Motor neuron (in vitro differentiated cells): ENCODE measurements at regions of chr2 and their contacts with region 1.

Region 1: GRCh38 chr2:186256540-186256939 is 229.5 kb upstream of the ZC3H15 start:
- ATAC-seq: peak in 4 of 8 experiments; percentile 43 to 80 (median 72)
- H3K4me3 ChIP-seq: no peak overlapping the region
- H3K27ac ChIP-seq: no peak overlapping the region
- H3K4me1 ChIP-seq: no peaks in the 10 kb centered on the region

Region 2: DNA sequence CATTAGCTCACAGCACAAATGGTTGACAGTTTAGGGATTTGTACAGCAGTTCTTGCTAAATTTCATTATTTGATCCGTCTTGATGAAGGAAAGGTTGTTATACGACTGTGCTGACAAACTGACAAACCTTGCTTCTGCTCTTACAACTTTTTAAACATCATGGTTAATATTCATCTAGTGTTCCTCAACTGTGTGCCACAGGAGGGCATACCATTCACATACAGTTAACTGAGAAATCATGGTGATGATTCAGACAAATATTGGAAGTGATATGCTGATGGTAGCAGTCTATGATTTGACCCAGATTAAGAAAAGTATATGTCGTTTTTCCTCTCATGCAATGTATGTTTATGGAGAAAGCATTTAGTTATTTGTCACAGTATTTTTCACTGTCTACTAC is 647.7 kb before region 1 on chr2:
- in situ Hi-C with region 1: loop called in 1 of 9 experiments (anchors 25 kb)
- ATAC-seq: peak in 2 of 8 experiments; percentile 63 to 75
- H3K4me3 ChIP-seq: no peak overlapping the region
- H3K27ac ChIP-seq: no peak overlapping the region
- H3K4me1 ChIP-seq: no peaks in the 10 kb centered on the region